GM10248 (cell line): ENCODE measurements at regions of chr19 and their contacts with region 1.

Region 1: DNA sequence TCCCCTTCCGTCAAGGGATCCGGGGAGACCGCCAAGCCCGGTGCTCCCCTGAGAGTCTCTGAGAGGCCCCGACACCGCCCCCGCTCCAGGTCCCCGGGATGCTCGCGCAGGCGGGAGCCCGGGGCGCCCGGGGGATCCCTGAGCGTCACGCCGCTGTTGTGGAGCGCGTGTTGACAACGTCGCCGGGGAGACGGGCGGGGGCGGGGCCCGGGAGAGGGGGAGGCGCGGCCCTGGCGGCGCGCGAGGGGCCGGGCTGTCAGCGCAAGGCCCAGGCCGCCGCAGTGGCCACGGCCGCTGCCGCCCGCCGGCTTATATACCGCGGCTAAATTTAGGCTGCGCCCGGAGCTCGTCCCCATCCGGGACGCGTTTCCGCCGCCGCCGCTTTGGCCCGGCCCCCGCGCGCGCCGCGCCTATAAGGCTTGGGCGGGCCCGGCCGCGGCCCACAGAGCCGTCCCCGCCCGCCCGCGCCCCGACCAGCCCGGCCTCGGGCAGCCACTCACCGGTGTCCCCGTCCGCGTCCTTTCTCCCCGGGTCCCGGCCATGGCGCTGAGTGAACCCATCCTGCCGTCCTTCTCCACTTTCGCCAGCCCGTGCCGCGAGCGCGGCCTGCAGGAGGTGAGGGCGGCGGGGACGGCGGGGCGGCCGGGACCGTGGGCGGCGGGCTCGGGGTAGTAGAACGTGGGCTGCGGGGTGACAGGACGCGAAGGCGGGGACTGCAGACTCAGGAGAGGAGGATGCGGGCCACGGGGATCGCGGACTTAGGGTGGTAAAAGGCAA is at the start of gene KLF2:
- DNase-seq: peak; percentile 90
- CTCF ChIP-seq: no peak

Region 2: GRCh38 chr19:16338470-16339360 is 14.1 kb after region 1 on chr19:
- CTCF ChIA-PET with region 1: interaction called, 10 read pairs
- POLR2A ChIA-PET with region 1: interaction called, 16 read pairs
- DNase-seq: peak; percentile 68
- CTCF ChIP-seq: no peak